Motor neuron (in vitro differentiated cells): ENCODE measurements at regions of chr7 and their contacts with region 1.

Region 1: GRCh38 chr7:64131696-64132095 is 75.3 kb upstream of the ZNF735 start:
- ATAC-seq: no peak
- H3K4me3 ChIP-seq: no peak overlapping the region
- H3K27ac ChIP-seq: no peak overlapping the region
- H3K4me1 ChIP-seq: no peaks in the 10 kb centered on the region

Region 2: GRCh38 chr7:63233881-63234280 is 897.8 kb before region 1 on chr7:
- in situ Hi-C with region 1: no loop called
- ATAC-seq: no peak
- H3K4me3 ChIP-seq: no peak overlapping the region
- H3K27ac ChIP-seq: no peak overlapping the region
- H3K4me1 ChIP-seq: no peaks in the 10 kb centered on the region

Region 3: GRCh38 chr7:64045301-64046040 is 86.2 kb before region 1 on chr7 and contains the start of gene ZNF727:
- in situ Hi-C with region 1: loop called in 1 of 9 experiments (anchors 25 kb)
- ATAC-seq: no peak
- H3K4me3 ChIP-seq: no peak within 1 kb of the TSS
- H3K27ac ChIP-seq: no peak within 1 kb of the TSS
- H3K4me1 ChIP-seq: no peaks in the 10 kb centered on the region
- total RNA-seq, gene ZNF727: 0.05 TPM in 1 of 8 experiments, not detected in the others

Region 4: DNA sequence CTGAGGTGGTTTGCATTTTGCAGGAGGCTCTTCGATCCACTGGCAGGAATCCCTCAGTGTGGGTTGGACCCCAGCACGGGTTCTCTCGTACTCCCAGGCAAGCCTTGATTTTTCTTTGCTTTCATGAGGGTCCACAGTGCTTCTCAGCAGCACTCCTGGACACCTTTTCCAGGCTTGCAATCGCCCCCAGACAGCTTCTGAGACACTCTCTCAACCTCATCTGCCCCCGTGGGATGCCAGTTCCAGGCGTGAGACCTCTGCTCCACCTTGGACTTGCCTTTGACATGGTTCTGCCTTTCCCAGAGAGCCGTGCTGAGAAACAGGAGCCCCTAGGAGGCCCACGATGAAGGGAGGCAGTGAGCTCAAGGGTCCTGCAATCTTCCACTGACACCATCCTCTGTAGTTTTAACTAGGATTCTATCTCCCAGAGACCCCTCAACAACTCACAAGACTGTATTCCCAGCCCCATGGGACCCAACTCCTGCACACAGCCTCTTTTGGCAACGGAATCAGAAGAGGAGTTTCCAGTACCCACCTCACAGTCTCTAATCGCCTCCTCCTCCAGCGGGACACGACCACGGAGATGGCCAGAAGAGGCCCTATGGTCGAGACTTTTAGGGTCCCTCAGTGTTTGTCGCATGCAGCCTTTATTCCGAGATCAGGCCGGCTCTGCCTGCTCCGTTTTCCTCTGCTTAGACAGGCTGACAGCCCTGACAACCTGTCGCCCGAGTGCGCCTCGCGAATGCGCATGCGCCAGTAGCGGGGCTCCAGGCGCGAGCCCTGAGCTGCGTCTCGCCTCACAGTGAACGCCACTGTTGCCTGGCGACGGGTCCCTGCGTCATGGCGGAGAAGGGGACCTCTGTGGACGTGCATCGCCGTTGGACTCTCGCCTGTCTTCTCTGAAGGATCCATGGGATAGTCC is 745.4 kb after region 1 on chr7:
- in situ Hi-C with region 1: no loop called
- ATAC-seq: peak; percentile 64 to 99 (median 98)
- H3K4me3 ChIP-seq: peak overlapping the region; percentile 26 to 32 (median 26)
- H3K27ac ChIP-seq: peak overlapping the region in 1 of 2 donors; percentile 23
- H3K4me1 ChIP-seq: peaks cover 0 to 4% of the 10 kb centered on the region in 2 donors